Posterior cingulate gyrus (tissue), 11 donors: ENCODE measurements at regions of chr9 and their contacts with region 1.

Region 1: GRCh38 chr9:13450723-13451122 is 171.2 kb upstream of the MPDZ start:
- DNase-seq: no peak

Region 2: GRCh38 chr9:13568841-13569601 is 118.3 kb after region 1 on chr9:
- intact Hi-C with region 1: loop called (anchors 5 kb)
- DNase-seq: peak in 9 of 10 donors; percentile 21 to 88 (median 45)

Region 3: DNA sequence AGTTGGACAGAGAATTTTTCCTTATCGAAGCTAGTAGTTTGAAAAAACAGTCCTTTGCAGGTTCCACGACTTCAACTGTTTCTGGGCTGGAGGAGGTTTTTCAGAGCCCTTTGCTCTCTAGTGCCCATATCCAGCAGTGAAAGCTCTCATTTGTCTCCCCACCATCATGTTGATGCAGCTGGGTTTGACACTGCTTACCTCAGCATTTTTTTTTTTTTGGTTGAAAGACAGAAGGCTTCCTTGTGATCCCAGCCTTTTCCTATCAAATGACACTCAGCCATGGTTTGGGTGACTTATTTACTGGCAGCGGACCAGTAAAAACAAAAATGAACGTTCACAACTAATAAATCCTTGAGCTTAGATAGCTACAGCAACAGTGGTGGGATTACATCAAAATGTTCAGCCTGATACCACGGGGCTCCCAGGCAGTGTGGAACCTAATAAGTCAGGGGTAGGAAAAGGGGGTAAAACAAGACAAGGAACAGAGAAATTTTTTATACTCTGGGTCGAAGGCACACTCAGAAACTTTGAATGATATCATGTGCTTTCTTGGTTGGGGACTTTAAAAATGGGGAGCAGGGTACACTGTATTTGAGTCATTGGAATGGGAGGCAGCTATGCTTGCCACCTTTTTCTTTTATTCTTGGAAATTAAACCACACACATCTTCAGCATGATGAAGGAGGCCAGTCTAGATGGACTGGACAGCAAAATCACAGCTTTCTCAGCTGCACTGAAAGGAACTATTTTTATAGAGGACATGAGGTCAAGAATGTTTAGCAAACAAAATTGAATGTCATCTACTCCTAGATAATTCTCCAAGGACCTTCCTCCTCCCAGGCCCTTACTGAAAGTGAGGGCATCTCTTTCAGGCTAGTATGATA is 137.7 kb after region 1 on chr9:
- intact Hi-C with region 1: loop called (anchors 5 kb)
- DNase-seq: no peak